GM13976 (cell line): ENCODE measurements at regions of chr1 and their contacts with region 1.

Region 1: DNA sequence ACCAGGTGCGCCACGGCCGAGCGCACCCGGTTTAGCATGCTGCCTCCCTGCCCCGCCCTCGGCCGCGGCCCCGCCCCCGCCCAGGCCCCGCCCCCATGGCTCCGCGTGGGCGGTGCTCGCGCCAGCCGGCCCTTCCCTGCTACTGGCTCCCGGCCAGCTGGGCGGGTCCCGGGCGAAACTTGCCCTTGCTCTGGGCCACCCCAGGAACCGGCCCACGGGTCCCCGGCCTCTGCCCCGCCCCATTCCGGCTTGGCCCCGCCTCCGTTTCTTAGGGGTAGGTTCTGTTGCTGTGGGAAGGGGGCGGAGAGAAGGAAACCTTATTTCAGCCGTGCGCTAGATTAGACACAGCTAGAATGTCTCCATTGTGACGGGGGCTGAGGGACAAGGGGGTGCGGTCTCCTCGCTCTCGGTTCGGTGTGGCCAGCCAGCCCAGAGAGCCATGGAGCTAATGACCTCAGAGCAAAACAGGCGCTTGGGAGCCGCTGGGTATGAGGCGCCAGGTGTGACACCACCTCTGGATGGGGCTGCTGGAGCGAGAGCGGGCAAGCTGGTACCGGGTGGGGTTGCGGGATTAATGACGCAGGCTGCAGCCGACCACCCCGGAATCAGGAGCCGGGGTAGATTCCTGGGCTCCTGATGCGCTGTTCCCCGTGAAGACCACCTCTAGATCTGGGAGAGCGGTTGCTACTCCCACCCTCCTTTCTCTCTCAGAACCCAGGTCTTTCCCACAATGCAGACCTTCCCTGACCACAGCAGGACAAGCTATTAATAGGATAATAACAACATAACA is at the start of gene PPM1J:
- DNase-seq: peak; percentile 98
- CTCF ChIP-seq: no peak

Region 2: DNA sequence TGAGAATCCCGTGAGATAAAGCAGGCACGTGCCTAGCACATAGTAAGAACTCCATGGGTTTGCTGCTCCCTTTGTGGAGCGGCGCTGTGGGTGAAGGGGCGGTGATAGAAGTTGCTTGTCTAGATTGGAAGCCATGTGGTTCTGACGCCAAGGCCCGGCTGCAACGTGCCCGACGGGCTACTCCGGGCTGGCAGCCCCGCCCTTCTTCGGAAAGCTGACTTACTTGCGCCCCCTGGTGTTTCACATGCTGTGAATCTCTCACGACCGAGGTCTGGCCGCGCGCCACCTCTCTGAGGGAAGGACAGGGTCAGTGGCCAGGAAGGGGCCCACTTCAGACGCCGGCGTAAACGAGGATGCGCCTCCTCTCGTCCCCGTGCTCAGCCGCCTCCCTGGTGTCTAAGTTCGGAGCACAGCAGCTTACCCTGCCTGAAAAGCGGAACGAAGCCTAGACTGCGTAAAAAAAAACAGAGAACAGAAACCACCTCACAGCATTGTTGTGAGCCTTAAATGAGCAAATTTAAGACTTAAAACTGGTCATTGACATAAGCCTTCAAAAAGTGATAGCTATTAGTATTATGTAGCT is 249.3 kb before region 1 on chr1:
- in situ Hi-C with region 1: no loop called
- DNase-seq: peak; percentile 86
- CTCF ChIP-seq: peak; percentile 81

Region 3: GRCh38 chr1:112619520-112620376 is 95.7 kb before region 1 on chr1 and contains the start of gene CAPZA1:
- in situ Hi-C with region 1: no loop called
- DNase-seq: peak; percentile 90
- CTCF ChIP-seq: no peak

Region 4: GRCh38 chr1:112809253-112809684 is 93.8 kb after region 1 on chr1:
- in situ Hi-C with region 1: loop called (anchors 5 kb)
- DNase-seq: peak; percentile 82
- CTCF ChIP-seq: peak; percentile 88